Psoas muscle (tissue), 8 donors: ENCODE measurements at regions of chr1 and their contacts with region 1.

Region 1: GRCh38 chr1:224377676-224378006 is 21.0 kb downstream of the CNIH4 start:
- DNase-seq: no peak
- ATAC-seq: peak; percentile 83 to 88 (median 86)
- H3K4me3 ChIP-seq: no peak overlapping the region
- H3K27ac ChIP-seq: peak overlapping the region; percentile 82
- H3K4me1 ChIP-seq: peaks cover 29% of the 10 kb centered on the region
- H3K27me3 ChIP-seq: no peaks in the 10 kb centered on the region
- CTCF ChIP-seq: no peak

Region 2: GRCh38 chr1:224329842-224330753 is 47.5 kb before region 1 on chr1 and contains the start of gene NVL:
- intact Hi-C with region 1: loop called in 1 of 2 experiments (anchors 1 kb)
- DNase-seq: peak; percentile 83 to 93
- ATAC-seq: peak; percentile 96 to 98 (median 98)
- H3K4me3 ChIP-seq: peak within 1 kb of the TSS; percentile 76
- H3K27ac ChIP-seq: peak within 1 kb of the TSS; percentile 94
- H3K4me1 ChIP-seq: peaks cover 17% of the 10 kb centered on the region
- H3K27me3 ChIP-seq: no peaks in the 10 kb centered on the region
- CTCF ChIP-seq: no peak
- total RNA-seq, gene NVL: 6.3 to 11.0 (median 8.1) TPM

Region 3: GRCh38 chr1:224420106-224420505 is 42.5 kb after region 1 on chr1:
- intact Hi-C with region 1: loop called in 1 of 2 experiments (anchors 5 kb)
- DNase-seq: no peak
- ATAC-seq: no peak
- H3K4me3 ChIP-seq: no peak overlapping the region
- H3K27ac ChIP-seq: no peak overlapping the region
- H3K4me1 ChIP-seq: peaks cover 2% of the 10 kb centered on the region
- H3K27me3 ChIP-seq: no peaks in the 10 kb centered on the region
- CTCF ChIP-seq: no peak